ENCODE measurements at regions of chr1 and their contacts with region 1.

Region 1: DNA sequence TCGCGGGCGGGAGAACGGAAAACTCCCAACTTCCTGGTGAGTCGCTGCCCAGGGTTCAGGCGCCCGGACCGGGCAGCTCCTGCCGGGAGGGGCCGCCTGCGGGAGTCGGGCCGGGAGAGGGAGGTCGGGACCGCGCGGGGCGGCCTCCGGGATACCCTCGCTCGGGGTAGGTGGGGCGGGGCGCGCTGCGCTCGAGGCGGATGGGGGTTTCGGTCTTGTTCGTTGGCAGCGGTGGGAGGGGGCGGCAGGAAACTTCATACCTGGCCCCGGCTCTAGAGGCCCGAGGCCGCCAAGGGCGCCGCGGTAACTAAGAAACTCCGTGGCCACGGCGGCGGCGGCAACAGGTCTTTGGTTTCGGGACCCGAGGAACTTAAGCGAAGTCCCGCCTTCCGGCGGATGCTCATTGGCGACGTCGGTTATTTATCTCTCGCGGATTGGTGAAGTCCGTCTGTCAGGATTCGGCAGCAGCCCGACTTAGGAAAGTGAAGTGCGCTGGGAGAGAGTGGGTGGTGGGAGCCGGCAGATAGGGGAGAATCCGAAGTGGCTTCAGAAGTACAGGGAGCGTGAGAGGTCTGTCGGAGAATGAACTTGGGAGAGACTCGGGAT is 546 bp downstream of the NEK7 start:
- DNase-seq: peak; percentile 89
- H3K4me3 Mint-ChIP-seq: peak overlapping the region; percentile 98
- H3K27ac Mint-ChIP-seq: peak overlapping the region; percentile 97
- H3K4me1 Mint-ChIP-seq: peaks cover 33% of the 10 kb centered on the region
- H3K27me3 Mint-ChIP-seq: no peaks in the 10 kb centered on the region

Region 2: DNA sequence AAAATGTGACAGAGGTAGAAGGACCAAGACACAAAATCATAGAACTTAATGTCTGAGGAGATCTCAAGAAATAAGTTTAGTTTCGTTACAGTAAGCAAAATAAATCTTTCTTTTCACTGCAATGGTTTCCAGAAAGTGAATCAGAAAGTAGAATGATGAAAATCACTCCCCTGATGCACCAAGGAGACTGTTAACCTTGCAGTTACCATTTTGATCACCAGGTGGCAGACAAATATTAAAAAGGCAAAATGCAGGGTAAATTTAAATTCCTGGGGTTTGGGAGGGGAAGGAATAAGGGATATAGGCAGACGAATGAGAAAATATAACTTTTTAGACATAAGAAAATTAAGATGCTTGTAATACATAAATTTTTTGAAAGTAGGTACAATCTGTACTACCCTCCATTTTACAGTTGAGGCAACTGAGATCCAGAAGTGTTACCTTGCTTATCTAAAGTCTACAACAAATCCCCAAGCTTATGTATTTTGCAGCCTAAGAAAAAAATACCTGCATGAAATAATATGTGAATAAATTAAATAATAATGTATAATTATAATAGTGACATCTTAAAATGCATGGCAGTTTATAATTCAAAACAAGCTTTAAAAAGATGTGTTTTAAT is 636.1 kb before region 1 on chr1:
- CTCF ChIA-PET with region 1: no interaction called
- POLR2A ChIA-PET with region 1: no interaction called
- intact Hi-C with region 1: loop called (anchors 10 kb)
- DNase-seq: no peak
- H3K4me3 Mint-ChIP-seq: no peak overlapping the region
- H3K27ac Mint-ChIP-seq: no peak overlapping the region
- H3K4me1 Mint-ChIP-seq: peaks cover 6% of the 10 kb centered on the region
- H3K27me3 Mint-ChIP-seq: no peaks in the 10 kb centered on the region

Region 3: GRCh38 chr1:197948926-197949899 is 208.1 kb before region 1 on chr1:
- CTCF ChIA-PET with region 1: interaction called, 3 read pairs
- POLR2A ChIA-PET with region 1: no interaction called
- intact Hi-C with region 1: loop called (anchors 5 kb)
- DNase-seq: peak; percentile 35
- H3K4me3 Mint-ChIP-seq: peak overlapping the region; percentile 11
- H3K27ac Mint-ChIP-seq: peak overlapping the region; percentile 80
- H3K4me1 Mint-ChIP-seq: peaks cover 22% of the 10 kb centered on the region
- H3K27me3 Mint-ChIP-seq: no peaks in the 10 kb centered on the region

Region 4: GRCh38 chr1:198118134-198118533 is 39.2 kb before region 1 on chr1:
- CTCF ChIA-PET with region 1: no interaction called
- POLR2A ChIA-PET with region 1: no interaction called
- intact Hi-C with region 1: no loop called
- DNase-seq: no peak
- H3K4me3 Mint-ChIP-seq: no peak overlapping the region
- H3K27ac Mint-ChIP-seq: no peak overlapping the region
- H3K4me1 Mint-ChIP-seq: no peaks in the 10 kb centered on the region
- H3K27me3 Mint-ChIP-seq: peaks cover 2% of the 10 kb centered on the region

Region 5: DNA sequence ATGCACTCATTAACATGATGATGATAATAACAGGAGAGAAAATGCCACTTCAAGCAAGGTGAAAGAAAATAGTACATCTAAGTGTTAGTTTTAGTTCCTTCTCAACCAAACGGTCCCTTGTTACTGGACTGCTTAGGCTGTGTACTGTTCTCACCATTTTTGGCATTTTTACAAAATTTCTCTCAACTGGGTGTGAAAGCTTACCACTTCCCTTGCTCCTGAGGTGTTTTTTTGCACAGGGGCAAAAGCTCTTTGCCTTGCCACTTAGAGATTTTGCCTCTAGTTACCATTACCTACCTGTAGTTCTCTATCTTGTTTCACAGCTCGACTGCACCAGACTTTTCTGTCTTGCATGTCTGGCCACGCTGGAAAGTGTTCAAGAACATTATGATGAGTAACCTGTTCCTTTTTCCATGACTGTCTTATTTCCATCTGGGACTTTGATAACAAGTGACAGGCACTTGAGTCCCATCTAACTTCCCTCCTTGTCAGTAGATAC is 10.1 kb after region 1 on chr1:
- CTCF ChIA-PET with region 1: interaction called, 13 read pairs
- POLR2A ChIA-PET with region 1: interaction called, 8 read pairs
- intact Hi-C with region 1: loop called (anchors 1 kb)
- DNase-seq: peak; percentile 33
- H3K4me3 Mint-ChIP-seq: peak overlapping the region; percentile 48
- H3K27ac Mint-ChIP-seq: peak overlapping the region; percentile 92
- H3K4me1 Mint-ChIP-seq: peaks cover 82% of the 10 kb centered on the region
- H3K27me3 Mint-ChIP-seq: no peaks in the 10 kb centered on the region

Region 6: DNA sequence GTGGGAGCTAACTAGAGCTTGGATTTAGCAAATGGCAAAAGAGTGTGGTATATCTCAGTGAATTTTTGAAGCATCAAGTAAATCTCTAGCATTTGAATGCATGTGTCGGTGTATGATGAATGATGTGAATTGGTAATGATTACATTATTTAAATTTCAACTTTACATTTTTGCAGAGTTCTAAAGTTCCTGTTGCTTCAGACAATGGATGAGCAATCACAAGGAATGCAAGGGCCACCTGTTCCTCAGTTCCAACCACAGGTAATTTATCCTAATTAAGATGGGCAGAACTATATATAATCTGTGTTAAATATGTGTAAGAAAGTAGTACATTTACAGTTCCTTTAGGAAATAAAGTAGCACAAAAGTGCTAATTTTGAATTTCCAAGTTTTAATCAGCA is 75.0 kb after region 1 on chr1:
- CTCF ChIA-PET with region 1: no interaction called
- POLR2A ChIA-PET with region 1: no interaction called
- intact Hi-C with region 1: no loop called
- DNase-seq: no peak
- H3K4me3 Mint-ChIP-seq: no peak overlapping the region
- H3K27ac Mint-ChIP-seq: no peak overlapping the region
- H3K4me1 Mint-ChIP-seq: peaks cover 29% of the 10 kb centered on the region
- H3K27me3 Mint-ChIP-seq: no peaks in the 10 kb centered on the region

Region 7: GRCh38 chr1:198253668-198254067 is 96.3 kb after region 1 on chr1:
- CTCF ChIA-PET with region 1: interaction called, 5 read pairs
- POLR2A ChIA-PET with region 1: interaction called, 4 read pairs
- intact Hi-C with region 1: loop called (anchors 1 kb)
- DNase-seq: no peak
- H3K4me3 Mint-ChIP-seq: no peak overlapping the region
- H3K27ac Mint-ChIP-seq: peak overlapping the region; percentile 61
- H3K4me1 Mint-ChIP-seq: peaks cover 36% of the 10 kb centered on the region
- H3K27me3 Mint-ChIP-seq: no peaks in the 10 kb centered on the region

Region 8: DNA sequence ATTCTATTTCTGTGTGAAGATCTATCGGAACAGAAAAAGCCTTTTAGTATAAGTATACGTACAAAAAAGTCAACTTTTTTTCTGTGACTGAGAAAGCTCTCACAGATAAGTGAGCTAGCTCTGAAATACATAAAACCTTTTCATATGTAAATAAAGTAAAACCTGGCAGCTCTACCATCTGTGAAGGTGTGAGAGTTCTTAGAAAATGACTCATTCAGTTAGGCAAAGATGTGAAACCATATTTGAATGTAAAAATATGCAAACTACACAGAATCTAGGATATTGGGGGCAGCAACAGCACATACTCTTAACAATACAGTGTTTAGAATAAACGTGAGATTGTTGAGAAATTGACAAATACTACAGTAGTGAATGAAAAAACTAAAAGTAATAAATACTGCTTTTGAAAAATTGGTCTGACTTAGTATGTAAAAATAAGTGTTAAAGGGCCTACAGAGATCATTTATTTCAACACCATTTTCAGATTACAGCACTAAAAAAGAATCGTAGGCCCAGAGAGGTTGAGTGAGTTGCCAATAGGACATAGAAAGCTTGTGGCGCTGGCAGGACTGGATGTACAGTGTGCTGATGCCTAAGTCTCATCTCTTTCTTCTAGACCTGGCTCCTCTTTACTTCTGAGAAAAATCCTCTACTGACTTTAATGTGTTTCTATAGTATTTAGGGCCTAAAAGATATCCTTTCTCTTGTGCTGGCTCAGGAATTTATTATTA is 363.3 kb after region 1 on chr1:
- CTCF ChIA-PET with region 1: interaction called, 5 read pairs
- POLR2A ChIA-PET with region 1: interaction called, 3 read pairs
- intact Hi-C with region 1: loop called (anchors 2 kb)
- DNase-seq: no peak
- H3K4me3 Mint-ChIP-seq: peak overlapping the region; percentile 67
- H3K27ac Mint-ChIP-seq: peak overlapping the region; percentile 79
- H3K4me1 Mint-ChIP-seq: peaks cover 78% of the 10 kb centered on the region
- H3K27me3 Mint-ChIP-seq: no peaks in the 10 kb centered on the region

Measured in activated CD4-positive, alpha-beta memory T cell treated with anti-CD3 and anti-CD28 coated beads for 36 hours (primary cell).